HCT116 (cell line): ENCODE measurements at regions of chr19 and their contacts with region 1.

Region 1: DNA sequence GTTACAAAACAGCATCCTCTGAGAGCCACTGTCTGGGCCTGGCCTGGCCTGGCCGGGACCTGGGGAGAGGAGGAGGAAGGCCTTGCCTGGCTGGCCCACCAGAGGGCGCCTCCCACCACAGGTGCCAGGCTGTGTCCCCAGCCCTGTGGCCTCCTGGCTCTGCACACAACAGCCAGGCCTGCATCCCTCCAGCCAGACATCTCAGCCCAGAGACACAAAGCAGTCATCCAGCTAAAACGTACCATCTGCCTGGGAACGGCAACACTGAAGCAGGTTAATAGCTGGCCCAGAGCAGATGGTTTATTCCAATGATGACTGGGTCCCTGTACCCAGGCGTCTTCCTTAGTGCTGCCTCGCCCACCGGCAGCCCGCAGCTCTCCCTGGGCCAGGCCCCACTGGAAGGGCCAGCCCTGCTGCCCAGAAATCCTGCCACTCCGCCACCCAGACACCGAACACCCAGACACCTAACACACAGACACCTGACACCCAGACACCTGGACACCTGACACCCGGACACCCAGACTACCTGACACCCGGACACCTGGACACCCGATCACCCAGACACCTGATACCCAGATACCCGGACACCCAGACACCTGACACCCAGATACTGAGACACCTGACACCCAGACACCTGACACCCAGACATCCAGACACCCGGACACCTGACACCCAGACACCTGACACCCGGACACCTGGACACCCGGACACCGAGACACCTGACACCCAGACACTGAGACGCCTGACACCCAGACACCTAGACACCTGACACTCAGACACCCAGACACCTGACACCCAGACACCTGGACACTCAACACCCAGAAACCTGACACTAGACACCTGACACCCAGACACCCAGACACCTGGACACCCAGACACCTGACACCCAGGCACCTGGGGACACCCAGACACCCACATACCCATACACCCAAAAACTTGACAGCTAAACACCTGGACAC is 20.1 kb downstream of the C19orf12 start:
- DNase-seq: no peak
- ATAC-seq: peak; percentile 99
- H3K4me3 ChIP-seq: no peak overlapping the region
- H3K27ac ChIP-seq: peak overlapping the region; percentile 35; the same call in 1 of the 2 replicates
- H3K4me1 ChIP-seq: peaks cover 0 to 6% of the 10 kb centered on the region in 2 experiments; a peak in 1 of 4 replicates
- H3K27me3 ChIP-seq: no peaks in the 10 kb centered on the region
- CTCF ChIP-seq: peak; percentile 56 to 95 (median 83); a peak in 5 of 6 replicates
- POLR2A ChIP-seq: no peak
- RAD21 ChIP-seq: peak; percentile 73

Region 2: GRCh38 chr19:29680447-29680846 is 14.5 kb before region 1 on chr19:
- CTCF ChIA-PET with region 1: no interaction called
- POLR2A ChIA-PET with region 1: no interaction called
- RAD21 ChIA-PET with region 1: no interaction called
- intact Hi-C with region 1: no loop called
- DNase-seq: no peak
- ATAC-seq: no peak
- H3K4me3 ChIP-seq: no peak overlapping the region
- H3K27ac ChIP-seq: no peak overlapping the region
- H3K4me1 ChIP-seq: no peaks in the 10 kb centered on the region
- H3K27me3 ChIP-seq: no peaks in the 10 kb centered on the region
- CTCF ChIP-seq: no peak
- POLR2A ChIP-seq: no peak
- RAD21 ChIP-seq: no peak

Region 3: GRCh38 chr19:29714953-29715700 is 20.2 kb after region 1 on chr19 and contains the start of gene C19orf12:
- CTCF ChIA-PET with region 1: interaction called, 6 read pairs
- POLR2A ChIA-PET with region 1: no interaction called
- RAD21 ChIA-PET with region 1: no interaction called
- intact Hi-C with region 1: loop called (anchors 1 kb)
- DNase-seq: no peak
- ATAC-seq: peak; percentile 81
- H3K4me3 ChIP-seq: peak within 1 kb of the TSS; percentile 80 to 96
- H3K27ac ChIP-seq: peak within 1 kb of the TSS; percentile 92
- H3K4me1 ChIP-seq: peaks cover 10% of the 10 kb centered on the region in 2 experiments
- H3K27me3 ChIP-seq: no peaks in the 10 kb centered on the region
- CTCF ChIP-seq: no peak
- POLR2A ChIP-seq: peak; percentile 45
- RAD21 ChIP-seq: no peak
- total RNA-seq, gene C19orf12: 10.0 TPM

Region 4: DNA sequence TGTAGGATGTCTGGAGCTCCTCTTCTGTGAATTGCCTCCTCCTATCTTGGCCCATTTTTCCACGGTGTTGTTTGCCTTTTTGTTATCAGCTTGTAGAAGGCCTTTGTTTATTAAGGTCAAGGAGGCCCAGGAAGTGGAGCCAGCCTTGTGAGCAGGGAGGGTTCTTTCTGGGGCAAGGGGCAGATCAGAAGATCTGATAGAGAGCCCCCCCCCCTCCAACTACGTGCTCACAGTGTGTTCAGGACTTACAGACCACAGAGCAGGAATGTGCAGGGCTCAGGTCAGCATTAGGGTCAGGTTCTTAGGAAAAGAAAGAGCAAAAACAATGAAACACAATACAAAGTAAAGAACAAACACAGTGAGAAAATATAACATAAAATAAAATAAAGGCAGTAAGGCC is 176.2 kb after region 1 on chr19:
- CTCF ChIA-PET with region 1: no interaction called
- POLR2A ChIA-PET with region 1: no interaction called
- RAD21 ChIA-PET with region 1: no interaction called
- intact Hi-C with region 1: no loop called
- DNase-seq: no peak
- ATAC-seq: no peak
- H3K4me3 ChIP-seq: no peak overlapping the region
- H3K27ac ChIP-seq: no peak overlapping the region
- H3K4me1 ChIP-seq: peaks cover 0 to 16% of the 10 kb centered on the region in 2 experiments; a peak in 3 of 4 replicates
- H3K27me3 ChIP-seq: no peaks in the 10 kb centered on the region
- CTCF ChIP-seq: no peak
- POLR2A ChIP-seq: no peak
- RAD21 ChIP-seq: no peak